SK-N-SH (cell line): ENCODE measurements at regions of chr6 and their contacts with region 1.

Region 1: GRCh38 chr6:26216356-26216885 is 129.2 kb downstream of the HFE start:
- DNase-seq: peak; percentile 70
- H3K4me3 ChIP-seq: peak overlapping the region; percentile 69
- H3K27ac ChIP-seq: peak overlapping the region; percentile 92 to 98
- H3K4me1 ChIP-seq: peaks cover 0 to 3% of the 10 kb centered on the region in 2 experiments; a peak in 1 of 4 replicates
- H3K27me3 ChIP-seq: no peaks in the 10 kb centered on the region
- CTCF ChIP-seq: no peak
- EP300 ChIP-seq: no peak
- RAD21 ChIP-seq: no peak

Region 2: DNA sequence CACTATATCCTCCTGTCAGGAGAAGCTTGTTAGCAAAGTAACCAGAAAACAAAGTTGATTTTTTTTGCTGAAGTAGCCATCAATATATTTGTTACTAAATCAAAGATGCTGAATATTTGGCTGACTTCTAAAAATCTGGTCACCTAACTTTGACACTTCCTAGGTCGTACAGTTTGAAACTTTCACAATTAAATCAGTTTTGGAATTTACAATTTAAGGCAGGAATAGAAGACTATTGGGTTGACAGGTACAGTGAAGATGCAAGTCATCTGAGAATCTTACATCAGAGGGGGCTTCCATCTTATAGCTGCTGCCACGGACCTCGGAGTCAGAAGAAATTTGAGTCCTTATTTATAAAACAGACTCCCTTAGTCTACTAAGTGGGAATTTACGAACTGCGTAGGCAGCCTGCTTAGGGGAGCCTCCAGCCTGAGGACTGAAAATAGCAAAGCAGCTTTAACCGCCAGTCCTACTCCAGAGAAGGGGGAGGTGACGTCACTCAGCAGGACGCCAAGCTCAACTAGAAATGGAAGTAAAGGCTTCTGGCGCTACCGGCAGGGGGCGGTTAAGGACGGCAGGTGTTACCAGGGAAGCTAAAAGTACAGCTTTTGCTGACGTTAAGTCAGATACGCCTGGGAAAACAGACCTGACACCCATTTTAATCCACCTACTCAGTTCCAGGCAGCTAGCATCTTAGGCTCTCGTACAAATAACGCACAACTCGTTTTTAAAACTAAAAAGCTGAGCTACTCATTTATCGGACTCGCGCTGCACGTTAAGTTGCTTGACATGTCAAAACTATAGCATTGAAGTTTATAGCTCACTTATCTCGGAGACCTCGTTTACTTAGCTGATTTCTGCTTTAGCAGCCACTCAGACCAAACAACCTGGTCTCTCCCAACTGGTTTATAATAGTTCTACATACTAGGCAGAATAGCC is 190.3 kb before region 1 on chr6:
- CTCF ChIA-PET with region 1: no interaction called
- POLR2A ChIA-PET with region 1: interaction called, 34 read pairs
- DNase-seq: peak; percentile 59
- H3K4me3 ChIP-seq: peak overlapping the region; percentile 70 to 89
- H3K27ac ChIP-seq: peak overlapping the region; percentile 92 to 99
- H3K4me1 ChIP-seq: peaks cover 15 to 34% of the 10 kb centered on the region in 2 experiments; a peak in 3 of 4 replicates
- H3K27me3 ChIP-seq: no peaks in the 10 kb centered on the region
- CTCF ChIP-seq: peak; percentile 91
- EP300 ChIP-seq: peak in 1 of 2 experiments; percentile 22; a peak in 1 of 4 replicates
- RAD21 ChIP-seq: peak; percentile 24; the same call in 1 of the 2 replicates

Region 3: DNA sequence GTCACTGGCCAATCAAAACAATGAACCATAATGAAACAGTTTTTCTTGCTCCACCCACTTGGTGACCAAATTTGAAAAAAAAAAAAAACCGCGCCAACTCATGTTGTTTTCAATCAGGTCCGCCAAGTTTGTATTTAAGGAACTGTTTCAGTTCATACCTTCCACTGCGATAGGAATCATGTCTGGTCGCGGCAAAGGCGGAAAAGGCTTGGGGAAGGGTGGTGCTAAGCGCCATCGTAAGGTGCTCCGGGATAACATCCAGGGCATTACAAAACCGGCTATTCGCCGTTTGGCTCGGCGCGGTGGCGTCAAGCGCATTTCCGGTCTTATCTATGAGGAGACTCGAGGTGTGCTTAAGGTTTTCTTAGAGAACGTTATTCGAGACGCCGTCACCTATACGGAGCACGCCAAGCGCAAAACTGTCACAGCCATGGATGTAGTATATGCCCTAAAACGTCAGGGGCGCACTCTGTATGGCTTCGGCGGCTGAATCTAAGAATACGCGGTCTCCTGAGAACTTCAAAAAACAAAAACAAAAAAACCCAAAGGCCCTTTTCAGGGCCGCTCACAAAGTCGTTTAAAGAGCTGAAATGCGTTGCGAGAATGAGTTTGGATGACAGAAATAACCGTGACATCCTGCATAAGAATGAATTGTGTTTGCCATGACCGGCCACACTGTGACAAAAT is 112.5 kb before region 1 on chr6:
- CTCF ChIA-PET with region 1: interaction called, 3 read pairs
- POLR2A ChIA-PET with region 1: interaction called, 13 read pairs
- DNase-seq: peak; percentile 69
- H3K4me3 ChIP-seq: peak overlapping the region; percentile 55 to 65
- H3K27ac ChIP-seq: peak overlapping the region; percentile 85 to 97
- H3K4me1 ChIP-seq: peaks cover 7 to 17% of the 10 kb centered on the region in 2 experiments
- H3K27me3 ChIP-seq: no peaks in the 10 kb centered on the region
- CTCF ChIP-seq: peak; percentile 62
- EP300 ChIP-seq: peak; percentile 91 to 97
- RAD21 ChIP-seq: no peak

Region 4: GRCh38 chr6:26172496-26172958 is 43.9 kb before region 1 on chr6:
- CTCF ChIA-PET with region 1: no interaction called
- POLR2A ChIA-PET with region 1: interaction called, 19 read pairs
- DNase-seq: peak; percentile 39
- H3K4me3 ChIP-seq: peak overlapping the region; percentile 60 to 86
- H3K27ac ChIP-seq: peak overlapping the region; percentile 96 to 97
- H3K4me1 ChIP-seq: peaks cover 3 to 12% of the 10 kb centered on the region in 2 experiments; a peak in 3 of 4 replicates
- H3K27me3 ChIP-seq: no peaks in the 10 kb centered on the region
- CTCF ChIP-seq: no peak
- EP300 ChIP-seq: no peak
- RAD21 ChIP-seq: no peak

Region 5: GRCh38 chr6:26204332-26205165 is 11.9 kb before region 1 on chr6:
- CTCF ChIA-PET with region 1: interaction called, 10 read pairs
- POLR2A ChIA-PET with region 1: interaction called, 211 read pairs
- DNase-seq: peak; percentile 83
- H3K4me3 ChIP-seq: peak overlapping the region; percentile 69 to 95
- H3K27ac ChIP-seq: peak overlapping the region; percentile 97 to 99
- H3K4me1 ChIP-seq: peaks cover 4 to 13% of the 10 kb centered on the region in 2 experiments; a peak in 3 of 4 replicates
- H3K27me3 ChIP-seq: no peaks in the 10 kb centered on the region
- CTCF ChIP-seq: peak; percentile 49
- EP300 ChIP-seq: peak; percentile 88 to 97
- RAD21 ChIP-seq: no peak

Region 6: GRCh38 chr6:26270903-26271667 is 54.7 kb after region 1 on chr6:
- CTCF ChIA-PET with region 1: interaction called, 3 read pairs
- POLR2A ChIA-PET with region 1: interaction called, 142 read pairs
- DNase-seq: peak; percentile 87
- H3K4me3 ChIP-seq: peak overlapping the region; percentile 66 to 75
- H3K27ac ChIP-seq: peak overlapping the region; percentile 84 to 99
- H3K4me1 ChIP-seq: peaks cover 0 to 14% of the 10 kb centered on the region in 2 experiments; a peak in 2 of 4 replicates
- H3K27me3 ChIP-seq: no peaks in the 10 kb centered on the region
- CTCF ChIP-seq: no peak
- EP300 ChIP-seq: peak in 1 of 2 experiments; percentile 40; a peak in 1 of 4 replicates
- RAD21 ChIP-seq: no peak

Region 7: DNA sequence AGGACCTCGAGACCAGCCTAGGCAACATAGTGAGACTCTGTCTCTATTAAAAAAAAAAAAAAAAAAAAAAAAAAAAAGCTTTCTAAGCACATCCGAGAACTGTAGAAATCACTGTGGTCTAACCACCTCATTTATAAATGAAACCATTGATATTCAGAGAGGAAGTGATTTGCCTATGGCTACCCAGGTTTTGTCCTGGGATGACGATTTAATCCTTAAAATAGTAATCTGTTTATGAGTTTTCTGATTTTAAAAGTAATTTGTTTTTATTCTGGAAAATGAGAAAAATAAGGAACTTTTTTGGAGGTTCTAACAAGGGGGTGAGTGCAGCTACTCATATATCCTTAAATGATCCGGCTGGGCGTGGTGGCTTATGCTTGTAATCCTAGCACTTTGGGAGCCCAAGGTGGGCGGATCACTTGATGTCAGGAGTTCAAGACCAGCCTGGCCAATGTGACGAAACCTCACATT is 142.1 kb after region 1 on chr6:
- CTCF ChIA-PET with region 1: no interaction called
- POLR2A ChIA-PET with region 1: no interaction called
- DNase-seq: no peak
- H3K4me3 ChIP-seq: no peak overlapping the region
- H3K27ac ChIP-seq: no peak overlapping the region
- H3K4me1 ChIP-seq: no peaks in the 10 kb centered on the region
- H3K27me3 ChIP-seq: no peaks in the 10 kb centered on the region
- CTCF ChIP-seq: no peak
- EP300 ChIP-seq: no peak
- RAD21 ChIP-seq: no peak

Region 8: GRCh38 chr6:27864906-27865849 is 1648.8 kb after region 1 on chr6:
- CTCF ChIA-PET with region 1: no interaction called
- POLR2A ChIA-PET with region 1: interaction called, 10 read pairs
- DNase-seq: peak; percentile 85
- H3K4me3 ChIP-seq: peak overlapping the region; percentile 47 to 80
- H3K27ac ChIP-seq: peak overlapping the region; percentile 80 to 97
- H3K4me1 ChIP-seq: peaks cover 0 to 20% of the 10 kb centered on the region in 2 experiments; a peak in 2 of 4 replicates
- H3K27me3 ChIP-seq: no peaks in the 10 kb centered on the region
- CTCF ChIP-seq: no peak
- EP300 ChIP-seq: no peak; a peak in 1 of 4 replicates
- RAD21 ChIP-seq: no peak